ENCODE measurements at regions of chrX and their contacts with region 1.

Region 1: DNA sequence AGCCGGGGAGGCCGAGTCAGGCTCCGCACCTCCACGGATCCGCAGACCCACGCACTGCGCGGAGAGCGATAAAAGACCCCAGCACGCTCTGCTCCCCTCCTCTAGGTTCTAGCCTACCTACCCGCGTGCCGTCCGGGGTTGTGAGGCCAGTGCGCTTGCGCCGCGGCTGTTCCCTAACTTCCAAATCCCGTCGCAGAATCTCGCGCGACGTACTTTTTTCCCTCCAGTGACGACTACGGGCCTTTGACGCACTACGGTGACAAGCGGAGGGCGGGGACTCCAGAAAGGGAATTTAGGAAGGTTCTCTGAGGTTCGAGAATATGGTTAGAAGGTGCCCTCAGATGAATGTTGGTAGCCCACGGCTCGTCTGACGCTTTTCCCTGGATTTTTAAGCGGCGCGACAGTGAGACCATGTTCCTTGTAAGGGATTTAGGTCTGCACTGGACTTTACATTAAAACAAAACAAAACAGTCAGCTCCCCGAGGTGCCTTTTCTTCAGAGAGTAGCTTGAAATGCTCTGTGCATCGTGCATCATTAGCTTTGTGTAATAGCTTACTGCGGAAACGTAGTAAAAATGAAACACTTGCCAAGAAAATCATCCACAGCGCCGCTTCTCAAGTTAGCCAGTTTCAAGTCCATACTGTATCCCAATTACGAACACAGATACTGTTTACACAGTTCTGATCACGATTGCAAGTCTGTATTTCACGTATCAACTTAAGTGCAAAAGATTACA is at the start of gene NKRF:
- DNase-seq: peak; percentile 83 to 96 (median 86)
- ATAC-seq: peak; percentile 92
- H3K4me3 ChIP-seq: peak within 1 kb of the TSS; percentile 84
- H3K27ac ChIP-seq: peak within 1 kb of the TSS; percentile 95
- H3K4me1 ChIP-seq: peaks cover 7 to 12% of the 10 kb centered on the region in 2 experiments; a peak in 4 of 5 replicates
- H3K27me3 ChIP-seq: no peaks in the 10 kb centered on the region
- CTCF ChIP-seq: no peak; a peak in 1 of 6 replicates
- EP300 ChIP-seq: no peak
- POLR2A ChIP-seq: peak; percentile 96
- RAD21 ChIP-seq: no peak
- polyA plus RNA-seq, gene NKRF: 8.9 to 10.8 TPM

Region 2: DNA sequence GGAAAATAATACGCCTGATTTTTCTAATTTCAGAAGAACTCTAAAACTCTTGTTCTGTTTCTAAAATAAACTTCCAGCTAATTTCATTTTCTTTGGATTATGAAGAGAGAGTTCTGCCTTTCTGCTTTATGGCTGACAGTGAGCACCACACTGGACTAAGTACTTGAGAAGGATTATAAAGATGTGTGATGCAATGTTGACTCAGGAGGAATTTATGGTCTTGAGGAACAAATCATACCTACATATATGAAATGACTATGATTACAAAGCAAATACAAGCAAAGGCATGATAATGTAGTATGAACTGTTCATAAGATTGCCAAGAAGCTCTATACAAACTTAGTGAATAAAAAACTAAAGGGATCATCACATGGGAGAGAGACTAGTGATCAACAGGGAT is 151.2 kb before region 1 on chrX:
- CTCF ChIA-PET with region 1: no interaction called
- POLR2A ChIA-PET with region 1: no interaction called
- in situ Hi-C with region 1: no loop called
- intact Hi-C with region 1: no loop called
- DNase-seq: no peak
- ATAC-seq: no peak
- H3K4me3 ChIP-seq: no peak overlapping the region
- H3K27ac ChIP-seq: no peak overlapping the region
- H3K4me1 ChIP-seq: no peaks in the 10 kb centered on the region
- H3K27me3 ChIP-seq: no peaks in the 10 kb centered on the region
- CTCF ChIP-seq: no peak
- EP300 ChIP-seq: no peak
- POLR2A ChIP-seq: no peak
- RAD21 ChIP-seq: no peak

Region 3: DNA sequence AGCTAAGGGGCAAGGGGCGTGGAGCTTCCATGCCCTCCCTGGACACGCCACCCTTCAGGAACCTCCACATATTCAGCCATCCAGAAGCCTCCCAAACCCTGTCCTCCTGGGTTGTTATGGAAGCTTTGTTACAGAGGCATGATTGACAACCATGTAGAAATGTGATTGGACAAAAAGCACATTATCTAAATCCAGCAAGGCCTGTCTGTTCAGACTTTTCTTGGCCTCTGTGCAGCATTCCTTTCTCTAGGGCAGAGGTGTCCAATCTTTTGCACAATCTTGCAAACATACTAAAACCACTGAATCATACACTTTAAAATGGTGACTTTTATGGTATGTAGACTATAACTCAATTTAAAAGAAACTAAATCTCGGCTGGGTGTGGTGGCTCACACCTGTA is 53.9 kb before region 1 on chrX:
- CTCF ChIA-PET with region 1: no interaction called
- POLR2A ChIA-PET with region 1: no interaction called
- in situ Hi-C with region 1: no loop called
- intact Hi-C with region 1: no loop called
- DNase-seq: no peak
- ATAC-seq: no peak
- H3K4me3 ChIP-seq: no peak overlapping the region
- H3K27ac ChIP-seq: no peak overlapping the region
- H3K4me1 ChIP-seq: no peaks in the 10 kb centered on the region
- H3K27me3 ChIP-seq: no peaks in the 10 kb centered on the region
- CTCF ChIP-seq: no peak
- EP300 ChIP-seq: no peak
- POLR2A ChIP-seq: no peak
- RAD21 ChIP-seq: no peak

Region 4: GRCh38 chrX:119693040-119693995 is 86.9 kb after region 1 on chrX and contains the start of gene SEPTIN6:
- CTCF ChIA-PET with region 1: no interaction called
- POLR2A ChIA-PET with region 1: interaction called, 4 read pairs
- in situ Hi-C with region 1: no loop called
- intact Hi-C with region 1: loop called (anchors 5 kb)
- DNase-seq: peak; percentile 79 to 88 (median 84)
- ATAC-seq: peak; percentile 83
- H3K4me3 ChIP-seq: peak within 1 kb of the TSS; percentile 91
- H3K27ac ChIP-seq: peak within 1 kb of the TSS; percentile 90
- H3K4me1 ChIP-seq: peaks cover 13 to 22% of the 10 kb centered on the region in 2 experiments
- H3K27me3 ChIP-seq: no peaks in the 10 kb centered on the region
- CTCF ChIP-seq: 0 out of 6 replicates have a peak, but pooled peaks of 1 of the 3 experiments have one; percentile 4
- EP300 ChIP-seq: no peak
- POLR2A ChIP-seq: peak; percentile 80
- RAD21 ChIP-seq: no peak
- polyA plus RNA-seq, gene SEPTIN6: 8.4 to 12.2 TPM

Region 5: GRCh38 chrX:119753571-119754257 is 147.3 kb after region 1 on chrX:
- CTCF ChIA-PET with region 1: no interaction called
- POLR2A ChIA-PET with region 1: no interaction called
- in situ Hi-C with region 1: no loop called
- intact Hi-C with region 1: no loop called
- DNase-seq: peak; percentile 20 to 46 (median 36)
- ATAC-seq: peak; percentile 56
- H3K4me3 ChIP-seq: no peak overlapping the region
- H3K27ac ChIP-seq: no peak overlapping the region
- H3K4me1 ChIP-seq: peaks cover 0 to 12% of the 10 kb centered on the region in 2 experiments; a peak in 2 of 5 replicates
- H3K27me3 ChIP-seq: no peaks in the 10 kb centered on the region
- CTCF ChIP-seq: peak; percentile 54 to 65 (median 61)
- EP300 ChIP-seq: no peak
- POLR2A ChIP-seq: no peak
- RAD21 ChIP-seq: peak; percentile 12 to 55; a peak in 2 of 4 replicates

Region 6: GRCh38 chrX:119775517-119776238 is 169.2 kb after region 1 on chrX:
- CTCF ChIA-PET with region 1: no interaction called
- POLR2A ChIA-PET with region 1: no interaction called
- in situ Hi-C with region 1: no loop called
- intact Hi-C with region 1: loop called (anchors 1 kb)
- DNase-seq: no peak
- ATAC-seq: no peak
- H3K4me3 ChIP-seq: no peak overlapping the region
- H3K27ac ChIP-seq: no peak overlapping the region
- H3K4me1 ChIP-seq: no peaks in the 10 kb centered on the region; a peak in 1 of 5 replicates
- H3K27me3 ChIP-seq: no peaks in the 10 kb centered on the region
- CTCF ChIP-seq: no peak
- EP300 ChIP-seq: no peak
- POLR2A ChIP-seq: no peak
- RAD21 ChIP-seq: no peak

Measured in K562 (cell line).